ENCODE measurements at regions of chr6 and their contacts with region 1.

Region 1: DNA sequence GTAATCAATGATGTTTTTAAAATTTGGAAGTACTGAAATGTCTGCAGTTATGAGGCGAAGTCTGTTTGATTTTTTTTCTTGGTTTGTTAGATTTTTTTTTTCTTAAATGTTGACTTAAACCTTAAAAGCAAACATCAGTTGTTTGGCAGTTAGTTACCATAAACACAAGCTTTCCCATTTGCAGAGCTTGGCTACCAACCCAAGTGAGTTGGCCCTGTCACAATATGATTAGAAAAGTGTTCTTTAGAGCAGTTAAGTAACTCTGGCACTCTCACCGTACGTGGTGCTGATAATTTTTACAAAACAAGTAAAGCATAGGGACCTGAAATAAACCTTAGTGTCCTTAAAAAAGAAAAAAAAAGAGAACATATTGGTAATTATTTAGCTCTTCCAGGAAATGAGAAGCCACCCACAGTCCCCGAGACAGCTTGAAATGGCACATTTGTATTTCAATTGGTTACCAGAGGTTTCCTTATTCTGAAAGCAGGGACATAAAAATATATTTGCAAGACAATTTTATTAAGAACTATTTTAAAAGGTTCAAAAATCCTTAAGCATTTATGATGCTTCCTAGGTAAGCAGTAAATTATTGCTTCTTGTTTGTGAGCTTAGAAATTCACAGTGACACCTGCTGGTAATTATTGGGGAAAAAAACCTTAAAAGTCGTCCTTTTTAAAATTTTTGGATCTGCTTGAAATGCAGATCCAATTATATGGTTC is 3.9 kb downstream of the HEY2 start:
- DNase-seq: no peak
- H3K4me3 ChIP-seq: no peak overlapping the region
- H3K27ac ChIP-seq: no peak overlapping the region
- H3K27me3 ChIP-seq: no peaks in the 10 kb centered on the region
- CTCF ChIP-seq: peak; percentile 13

Region 2: GRCh38 chr6:125273965-125274364 is 479.4 kb before region 1 on chr6:
- in situ Hi-C with region 1: no loop called
- DNase-seq: peak; percentile 45
- H3K4me3 ChIP-seq: no peak overlapping the region
- H3K27ac ChIP-seq: no peak overlapping the region
- H3K27me3 ChIP-seq: no peaks in the 10 kb centered on the region
- CTCF ChIP-seq: no peak

Region 3: GRCh38 chr6:125314019-125314581 is 439.3 kb before region 1 on chr6:
- in situ Hi-C with region 1: loop called (anchors 5 kb)
- DNase-seq: peak; percentile 67
- H3K4me3 ChIP-seq: no peak overlapping the region
- H3K27ac ChIP-seq: no peak overlapping the region
- H3K27me3 ChIP-seq: no peaks in the 10 kb centered on the region
- CTCF ChIP-seq: peak; percentile 94

Region 4: DNA sequence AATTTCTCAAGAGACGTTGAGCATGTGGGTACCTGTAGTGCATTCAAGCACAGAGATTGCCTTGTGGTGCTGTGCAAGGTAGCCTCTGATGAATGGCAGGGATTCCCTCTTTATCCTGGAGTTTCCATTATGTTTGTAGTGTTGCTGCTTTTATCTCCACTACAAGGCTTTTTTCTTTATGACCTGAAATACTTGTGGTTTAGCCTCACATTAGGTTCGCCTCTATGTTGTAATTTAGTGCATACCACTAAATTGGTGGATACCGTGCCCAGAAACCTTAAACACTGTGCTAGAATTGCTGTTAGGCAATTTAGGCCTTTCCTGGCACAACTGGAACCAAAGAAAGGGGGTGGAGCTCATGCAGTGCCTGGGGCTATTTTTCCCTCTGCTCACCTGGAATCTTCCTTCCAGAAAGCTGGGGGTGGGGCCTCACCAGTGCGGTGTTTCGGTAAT is 114.1 kb after region 1 on chr6:
- in situ Hi-C with region 1: no loop called
- DNase-seq: no peak
- H3K4me3 ChIP-seq: no peak overlapping the region
- H3K27ac ChIP-seq: no peak overlapping the region
- H3K27me3 ChIP-seq: no peaks in the 10 kb centered on the region
- CTCF ChIP-seq: no peak

Region 5: GRCh38 chr6:126156973-126157372 is 403.6 kb after region 1 on chr6:
- in situ Hi-C with region 1: no loop called
- DNase-seq: no peak
- H3K4me3 ChIP-seq: no peak overlapping the region
- H3K27ac ChIP-seq: no peak overlapping the region
- H3K27me3 ChIP-seq: no peaks in the 10 kb centered on the region
- CTCF ChIP-seq: no peak